Dorsolateral prefrontal cortex (tissue), 120 donors: ENCODE measurements at regions of chr17 and their contacts with region 1.

Region 1: GRCh38 chr17:35747540-35748017 is 5.5 kb downstream of the GAS2L2 start:
- DNase-seq: peak in 9 of 10 donors; percentile 69 to 85 (median 79)
- H3K4me3 ChIP-seq: no peak overlapping the region
- H3K27ac ChIP-seq: no peak overlapping the region
- H3K27me3 ChIP-seq: peaks cover 0 to 61% (median 17%) of the 10 kb centered on the region in 45 donors
- CTCF ChIP-seq: peak; percentile 62 to 96 (median 92)

Region 2: DNA sequence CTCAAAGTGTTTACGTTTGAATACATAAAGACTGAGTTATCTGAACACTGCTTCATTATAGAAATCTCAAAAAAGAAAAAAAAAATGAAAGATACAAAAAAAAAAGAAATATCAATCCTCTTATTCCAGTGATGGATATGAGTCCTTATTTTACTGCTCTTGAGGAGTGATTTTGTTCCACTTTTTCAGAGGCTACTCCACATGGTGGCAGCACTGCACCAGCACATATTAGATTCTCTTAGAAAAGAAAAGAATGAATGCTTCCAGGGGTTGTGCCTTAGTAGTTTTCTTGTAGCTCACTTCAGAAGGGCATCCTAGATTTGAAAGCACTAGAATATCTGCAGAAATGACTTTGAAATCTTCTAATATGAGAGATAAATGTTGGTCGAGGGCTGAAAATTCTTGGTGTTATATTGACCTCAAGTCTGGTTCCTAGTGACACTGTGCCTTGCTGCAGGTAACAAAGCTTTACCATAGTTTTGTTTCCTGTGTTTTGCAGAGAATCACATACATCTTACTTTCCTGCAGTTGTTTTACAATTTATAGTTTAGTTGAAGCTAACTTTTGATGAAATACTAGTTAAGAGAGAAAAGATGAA is 134.6 kb before region 1 on chr17:
- intact Hi-C with region 1: loop called (anchors 1 to 5 kb)
- DNase-seq: peak in 5 of 10 donors; percentile 40 to 76 (median 62)
- H3K4me3 ChIP-seq: no peak overlapping the region
- H3K27ac ChIP-seq: no peak overlapping the region
- H3K27me3 ChIP-seq: no peaks in the 10 kb centered on the region
- CTCF ChIP-seq: peak; percentile 47 to 83 (median 66)